Dorsolateral prefrontal cortex (tissue), 120 donors: ENCODE measurements at regions of chr3 and their contacts with region 1.

Region 1: DNA sequence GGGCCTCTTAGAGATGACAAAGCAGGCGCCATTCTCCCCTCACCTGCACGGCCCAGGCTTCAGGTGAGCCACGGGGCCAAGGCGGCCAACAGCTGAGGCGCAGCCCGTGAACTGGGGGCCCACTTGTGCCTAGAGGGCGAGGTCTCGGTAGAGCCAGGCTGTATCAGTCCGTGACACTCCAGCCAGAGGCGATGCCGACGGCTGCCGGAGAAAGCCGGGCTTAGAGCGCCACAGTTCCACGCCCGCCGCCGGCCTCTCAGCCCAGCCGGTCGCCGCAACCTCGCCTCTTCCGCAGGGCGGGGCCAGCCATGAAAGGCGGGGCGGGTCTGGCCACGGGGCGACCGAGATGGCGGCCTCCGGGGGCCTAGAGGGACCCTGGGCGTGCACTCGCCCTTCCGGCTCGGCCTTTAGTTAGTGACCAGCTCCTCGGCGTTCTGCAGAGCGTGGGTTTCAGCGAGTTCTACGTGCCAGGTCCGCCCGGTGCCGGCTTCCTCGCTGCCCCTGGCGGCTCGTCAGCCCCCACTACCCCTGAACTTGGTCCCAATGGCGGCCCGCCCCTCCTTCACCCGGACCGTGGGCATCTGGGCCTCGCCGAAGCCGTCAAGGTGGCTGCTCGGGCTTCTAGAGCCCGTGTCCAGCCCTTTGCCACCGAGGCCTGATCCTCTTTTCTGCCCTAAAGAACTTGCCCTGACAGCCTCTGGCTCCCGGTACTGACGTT is at the start of gene ZNF621:
- DNase-seq: peak; percentile 74 to 95 (median 87)
- H3K4me3 ChIP-seq: peak within 1 kb of the TSS; percentile 51 to 98 (median 83)
- H3K27ac ChIP-seq: peak within 1 kb of the TSS; percentile 61 to 98 (median 93)
- H3K27me3 ChIP-seq: no peaks in the 10 kb centered on the region
- CTCF ChIP-seq: peak in 44 of 56 donors; percentile 11 to 64 (median 36)
- total RNA-seq, gene ZNF621: 15.7 to 46.1 (median 28.3) TPM

Region 2: GRCh38 chr3:40333416-40333815 is 191.3 kb before region 1 on chr3:
- intact Hi-C with region 1: loop called in 1 of 2 experiments (anchors 5 kb)
- DNase-seq: no peak
- H3K4me3 ChIP-seq: no peak overlapping the region
- H3K27ac ChIP-seq: no peak overlapping the region
- H3K27me3 ChIP-seq: no peaks in the 10 kb centered on the region
- CTCF ChIP-seq: no peak

Region 3: GRCh38 chr3:40476478-40477470 is 48.0 kb before region 1 on chr3 and contains the start of gene ZNF619:
- intact Hi-C with region 1: loop called (anchors 2 to 5 kb)
- DNase-seq: peak; percentile 52 to 78 (median 68)
- H3K4me3 ChIP-seq: peak within 1 kb of the TSS; percentile 60 to 98 (median 87)
- H3K27ac ChIP-seq: peak within 1 kb of the TSS in 55 of 59 donors; percentile 8 to 94 (median 72)
- H3K27me3 ChIP-seq: no peaks in the 10 kb centered on the region
- CTCF ChIP-seq: peak in 15 of 56 donors; percentile 7 to 33 (median 17)
- total RNA-seq, gene ZNF619: 3.6 to 15.9 (median 7.6) TPM

Region 4: GRCh38 chr3:40741729-40742128 is 217.0 kb after region 1 on chr3:
- intact Hi-C with region 1: no loop called
- DNase-seq: peak in 5 of 10 donors; percentile 24 to 76 (median 63)
- H3K4me3 ChIP-seq: no peak overlapping the region
- H3K27ac ChIP-seq: peak overlapping the region in 19 of 59 donors; percentile 20 to 65 (median 45)
- H3K27me3 ChIP-seq: no peaks in the 10 kb centered on the region
- CTCF ChIP-seq: no peak